AG04450 (cell line): ENCODE measurements at regions of chr6 and their contacts with region 1.

Region 1: DNA sequence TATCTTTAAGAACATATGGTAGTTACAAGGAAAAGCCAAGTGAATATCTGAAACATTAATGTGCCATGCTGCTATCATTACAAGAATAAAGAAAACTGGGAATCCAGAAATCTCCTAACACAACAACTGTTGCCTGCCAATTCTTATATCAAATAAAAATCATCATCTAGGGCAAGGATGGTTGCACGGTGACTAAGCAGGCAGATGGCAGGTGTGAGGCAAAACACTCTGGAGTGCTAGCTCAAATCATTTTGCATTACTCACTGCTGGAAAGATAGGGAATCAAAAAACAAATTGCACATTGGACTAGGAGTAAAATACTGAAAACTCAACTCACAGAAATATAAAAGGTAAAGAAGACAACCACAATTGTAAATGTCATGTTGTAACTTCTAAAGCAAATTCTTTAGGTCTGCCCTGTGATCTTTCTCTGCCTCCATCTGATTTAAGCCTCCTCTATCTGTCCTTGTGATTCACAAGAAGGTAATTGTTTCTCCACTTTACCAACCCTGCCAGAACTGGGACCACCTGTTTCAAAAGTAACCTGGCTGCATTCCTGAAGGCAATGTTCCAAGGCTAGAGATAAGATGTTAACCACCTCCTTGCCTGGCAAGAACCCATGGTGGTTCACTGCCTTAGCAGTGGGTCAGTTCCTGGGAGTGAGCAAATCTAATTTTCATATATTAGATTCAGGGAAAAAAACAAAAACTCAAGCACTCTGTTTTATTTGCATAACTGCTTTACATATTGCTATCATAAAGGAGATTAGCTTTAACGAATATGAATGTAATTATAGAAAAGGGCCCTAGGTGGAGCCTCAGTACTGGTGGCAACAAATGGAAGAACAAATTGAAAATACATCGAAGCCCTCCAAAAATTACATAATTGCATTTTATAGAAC is 33.1 kb upstream of the LCA5 start:
- DNase-seq: no peak
- H3K4me3 ChIP-seq: no peak overlapping the region
- H3K27ac ChIP-seq: no peak overlapping the region
- H3K27me3 ChIP-seq: no peaks in the 10 kb centered on the region
- CTCF ChIP-seq: peak; percentile 77

Region 2: DNA sequence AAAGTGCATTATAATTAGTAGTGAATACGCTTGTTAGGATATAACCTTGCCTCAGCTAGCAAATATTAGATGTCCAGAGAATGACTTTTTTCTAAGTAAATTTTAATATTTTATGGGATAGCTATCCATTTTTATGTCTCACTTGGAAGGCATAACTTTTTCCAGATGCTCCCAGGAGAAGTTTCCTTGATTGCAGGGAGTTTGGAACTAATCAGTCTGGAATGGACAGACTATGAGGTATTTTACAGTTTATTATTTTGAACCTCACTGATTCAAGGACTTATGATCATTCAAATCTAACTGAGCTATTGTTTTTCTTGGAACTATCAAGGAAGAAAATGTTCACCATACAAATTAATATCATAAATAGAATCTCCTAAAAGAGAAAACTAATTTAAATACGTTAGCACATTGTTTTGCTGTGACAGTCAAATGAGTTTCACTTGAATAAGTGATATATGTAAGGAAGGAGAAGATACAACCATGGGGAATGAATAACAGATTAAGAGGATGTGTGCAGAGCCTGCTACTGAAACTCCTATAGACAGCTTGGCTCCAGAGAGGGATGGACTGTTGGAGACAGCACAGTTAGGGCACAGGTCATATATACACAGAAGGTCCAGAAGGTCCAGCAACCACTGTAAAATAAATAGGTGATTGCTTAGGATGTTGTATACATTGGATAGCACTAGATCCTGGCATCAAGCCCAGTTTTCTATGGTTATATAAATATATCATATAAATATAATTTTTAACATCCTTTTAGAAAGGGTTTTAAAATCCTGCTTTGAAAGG is 12.5 kb before region 1 on chr6:
- CTCF ChIA-PET with region 1: interaction called, 13 read pairs
- POLR2A ChIA-PET with region 1: no interaction called
- DNase-seq: no peak
- H3K4me3 ChIP-seq: no peak overlapping the region
- H3K27ac ChIP-seq: no peak overlapping the region
- H3K27me3 ChIP-seq: no peaks in the 10 kb centered on the region
- CTCF ChIP-seq: no peak

Region 3: GRCh38 chr6:79672631-79673111 is 102.3 kb after region 1 on chr6:
- CTCF ChIA-PET with region 1: interaction called, 97 read pairs
- POLR2A ChIA-PET with region 1: no interaction called
- DNase-seq: no peak
- H3K4me3 ChIP-seq: no peak overlapping the region
- H3K27ac ChIP-seq: no peak overlapping the region
- H3K27me3 ChIP-seq: no peaks in the 10 kb centered on the region
- CTCF ChIP-seq: peak; percentile 70

Region 4: DNA sequence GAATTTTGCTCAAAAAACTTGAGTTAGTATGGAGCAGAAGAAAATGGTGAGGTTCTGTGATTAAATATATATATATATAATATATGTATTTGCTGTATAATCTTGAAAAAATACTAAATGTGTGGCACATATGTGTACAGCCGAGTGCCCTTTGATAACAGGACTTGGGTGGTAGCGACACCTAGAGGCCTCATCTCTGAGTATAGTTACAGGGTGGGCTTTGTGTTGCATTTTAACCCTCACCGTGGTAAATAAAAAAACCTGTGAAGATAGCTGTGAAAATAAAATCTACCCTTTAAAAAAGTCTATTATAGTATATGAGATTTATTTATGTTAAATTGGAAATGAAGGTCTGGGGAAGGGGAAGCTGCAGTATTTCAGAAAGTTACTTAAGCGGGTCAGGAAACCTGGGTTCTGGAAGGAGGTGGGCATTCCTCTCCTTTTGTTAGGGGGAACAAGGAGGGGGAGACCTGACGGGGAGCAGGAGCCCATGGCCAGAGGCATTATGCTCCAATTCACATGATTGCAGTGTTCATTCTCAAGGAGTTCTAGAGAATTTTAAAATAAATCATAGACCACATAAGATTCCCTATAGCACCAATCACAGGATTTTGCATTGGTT is 143.4 kb after region 1 on chr6:
- CTCF ChIA-PET with region 1: interaction called, 52 read pairs
- POLR2A ChIA-PET with region 1: no interaction called
- DNase-seq: no peak
- H3K4me3 ChIP-seq: no peak overlapping the region
- H3K27ac ChIP-seq: no peak overlapping the region
- H3K27me3 ChIP-seq: peaks cover 5% of the 10 kb centered on the region
- CTCF ChIP-seq: peak; percentile 59

Region 5: GRCh38 chr6:79949233-79949632 is 378.9 kb after region 1 on chr6:
- CTCF ChIA-PET with region 1: no interaction called
- POLR2A ChIA-PET with region 1: no interaction called
- DNase-seq: peak; percentile 23
- H3K4me3 ChIP-seq: no peak overlapping the region
- H3K27ac ChIP-seq: no peak overlapping the region
- H3K27me3 ChIP-seq: peaks cover 6% of the 10 kb centered on the region
- CTCF ChIP-seq: peak; percentile 72